IMR-90 (cell line): ENCODE measurements at regions of chr2 and their contacts with region 1.

Region 1: GRCh38 chr2:102235491-102235890 is 48.7 kb downstream of the IL1RL2 start:
- DNase-seq: peak; percentile 29
- ATAC-seq: peak; percentile 62
- H3K4me3 ChIP-seq: no peak overlapping the region
- H3K27ac ChIP-seq: no peak overlapping the region
- H3K4me1 ChIP-seq: peaks cover 7% of the 10 kb centered on the region
- H3K27me3 ChIP-seq: no peaks in the 10 kb centered on the region
- CTCF ChIP-seq: peak; percentile 55
- POLR2A ChIP-seq: no peak
- RAD21 ChIP-seq: peak; percentile 72

Region 2: GRCh38 chr2:102166189-102166845 is 69.2 kb before region 1 on chr2:
- CTCF ChIA-PET with region 1: interaction called, 9 read pairs
- POLR2A ChIA-PET with region 1: no interaction called
- dilution Hi-C with region 1: no loop called
- in situ Hi-C with region 1: no loop called
- intact Hi-C with region 1: loop called (anchors 5 kb)
- DNase-seq: peak; percentile 69
- ATAC-seq: peak; percentile 85
- H3K4me3 ChIP-seq: no peak overlapping the region
- H3K27ac ChIP-seq: no peak overlapping the region
- H3K4me1 ChIP-seq: peaks cover 4% of the 10 kb centered on the region; the same call in 1 of the 2 replicates
- H3K27me3 ChIP-seq: no peaks in the 10 kb centered on the region
- CTCF ChIP-seq: peak; percentile 59
- POLR2A ChIP-seq: 0 out of 2 replicates have a peak, but pooled peaks have one; percentile 24
- RAD21 ChIP-seq: peak; percentile 75

Region 3: DNA sequence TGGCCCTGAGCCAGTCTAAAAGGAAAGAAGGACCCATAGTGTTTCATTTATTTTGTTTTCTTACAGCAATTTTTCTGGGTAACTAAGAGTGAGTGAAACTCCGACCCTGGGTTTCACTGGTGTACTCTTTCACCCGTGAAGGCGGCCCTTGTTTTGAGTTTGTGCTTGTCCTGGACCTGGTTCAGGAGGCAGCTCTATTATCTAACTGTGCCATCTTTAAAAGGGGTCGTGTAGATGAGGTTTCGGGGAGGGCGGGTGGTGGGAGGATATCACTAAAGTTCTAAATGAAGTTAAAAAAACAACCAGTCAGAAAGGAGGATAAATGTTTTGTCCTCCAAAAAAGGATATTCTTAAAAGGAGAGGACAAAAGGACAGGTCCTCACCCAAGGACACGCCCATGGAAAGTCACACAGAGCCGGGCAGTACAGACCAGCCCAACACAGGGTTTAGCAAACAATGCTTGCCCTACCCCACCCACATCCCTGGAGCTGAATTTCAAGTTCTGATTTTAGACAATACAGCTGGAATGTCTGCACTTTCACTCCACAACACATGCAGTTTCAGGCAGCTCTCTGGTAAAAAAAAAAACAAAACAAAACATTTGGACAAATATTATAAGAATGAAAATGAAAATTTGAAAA is 305.3 kb after region 1 on chr2:
- CTCF ChIA-PET with region 1: no interaction called
- POLR2A ChIA-PET with region 1: no interaction called
- dilution Hi-C with region 1: no loop called
- in situ Hi-C with region 1: no loop called
- intact Hi-C with region 1: no loop called
- DNase-seq: no peak
- ATAC-seq: no peak
- H3K4me3 ChIP-seq: no peak overlapping the region
- H3K27ac ChIP-seq: no peak overlapping the region
- H3K4me1 ChIP-seq: no peaks in the 10 kb centered on the region
- H3K27me3 ChIP-seq: no peaks in the 10 kb centered on the region; the same call in 1 of the 2 replicates
- CTCF ChIP-seq: no peak
- POLR2A ChIP-seq: no peak
- RAD21 ChIP-seq: no peak